ENCODE measurements at regions of chr9 and their contacts with region 1.

Region 1: GRCh38 chr9:130780865-130781504 is 54.1 kb upstream of the ABL1 start:
- DNase-seq: peak in 4 of 5 donors; percentile 75 to 79 (median 76)
- ATAC-seq: peak; percentile 77 to 94 (median 86)
- H3K4me3 ChIP-seq: peak overlapping the region in 10 of 12 donors; percentile 6 to 55 (median 39)
- H3K27ac ChIP-seq: peak overlapping the region; percentile 74 to 95 (median 84)
- H3K4me1 ChIP-seq: peaks cover 0 to 55% (median 33%) of the 10 kb centered on the region in 12 donors
- H3K27me3 ChIP-seq: no peaks in the 10 kb centered on the region
- CTCF ChIP-seq: no peak
- POLR2A ChIP-seq: peak in 1 of 2 donors; percentile 53

Region 2: DNA sequence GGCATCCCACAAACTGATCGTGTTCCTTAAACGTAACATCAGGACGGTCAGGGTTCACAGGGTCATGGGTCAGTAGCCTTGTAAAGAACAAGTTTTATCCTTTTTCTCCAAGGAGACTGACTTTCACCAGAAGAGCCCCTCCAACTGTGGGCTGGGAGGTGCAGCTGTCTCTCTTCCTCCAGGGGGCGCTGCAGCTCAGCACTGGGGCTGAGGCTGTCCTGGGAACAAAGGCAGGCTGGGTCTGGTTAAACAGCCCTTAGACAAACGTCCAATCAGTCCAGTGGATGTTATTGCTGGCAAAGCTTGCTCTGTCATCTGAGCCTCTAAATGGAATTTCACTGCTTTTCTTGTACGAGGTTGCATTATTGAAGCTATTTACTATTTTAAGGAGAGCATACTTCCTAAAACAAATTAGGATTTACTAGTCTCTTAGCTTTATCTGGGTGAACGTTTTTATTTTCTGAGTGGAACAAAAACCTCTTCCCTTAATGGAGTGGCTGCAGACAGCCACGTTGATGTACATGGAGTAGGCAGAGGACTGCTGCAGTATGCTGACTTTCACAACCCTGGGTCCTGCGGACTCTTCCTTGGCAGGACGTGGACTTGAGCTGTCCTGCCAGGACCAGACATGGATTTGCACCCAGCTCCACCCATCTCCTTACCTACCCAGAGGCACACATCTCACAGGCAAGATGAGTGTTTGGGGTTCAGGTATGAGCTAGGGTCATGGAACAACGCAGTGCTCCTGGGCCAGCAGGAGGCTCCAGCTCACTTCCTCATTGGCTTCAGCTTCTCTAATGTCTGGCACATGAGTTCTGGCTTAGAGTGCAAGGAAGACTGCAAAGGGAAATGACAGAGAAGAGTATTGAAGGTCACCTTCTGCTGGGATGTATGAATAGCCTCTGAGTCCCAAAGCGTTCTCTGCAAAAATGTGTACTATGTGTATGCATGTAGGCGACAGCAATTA is 79.6 kb before region 1 on chr9:
- intact Hi-C with region 1: no loop called
- DNase-seq: peak; percentile 80 to 89 (median 82)
- ATAC-seq: peak; percentile 90 to 96 (median 92)
- H3K4me3 ChIP-seq: no peak overlapping the region
- H3K27ac ChIP-seq: peak overlapping the region in 4 of 12 donors; percentile 3 to 50 (median 15)
- H3K4me1 ChIP-seq: peaks cover 0 to 17% (median 8%) of the 10 kb centered on the region in 12 donors
- H3K27me3 ChIP-seq: no peaks in the 10 kb centered on the region
- CTCF ChIP-seq: peak; percentile 90 to 97 (median 93)
- POLR2A ChIP-seq: no peak

Region 3: GRCh38 chr9:130810609-130811136 is 29.7 kb after region 1 on chr9:
- intact Hi-C with region 1: loop called in 1 of 10 experiments (anchors 5 kb)
- DNase-seq: no peak
- ATAC-seq: no peak
- H3K4me3 ChIP-seq: no peak overlapping the region
- H3K27ac ChIP-seq: no peak overlapping the region
- H3K4me1 ChIP-seq: peaks cover 0 to 6% (median 0%) of the 10 kb centered on the region in 12 donors
- H3K27me3 ChIP-seq: no peaks in the 10 kb centered on the region
- CTCF ChIP-seq: no peak
- POLR2A ChIP-seq: no peak

Region 4: GRCh38 chr9:130834371-130835311 is 53.7 kb after region 1 on chr9 and contains the start of gene ABL1:
- intact Hi-C with region 1: loop called in 6 of 10 experiments (anchors 2 to 10 kb)
- DNase-seq: peak; percentile 80 to 88 (median 82)
- ATAC-seq: peak; percentile 69 to 92 (median 85)
- H3K4me3 ChIP-seq: peak within 1 kb of the TSS; percentile 38 to 92 (median 70)
- H3K27ac ChIP-seq: peak within 1 kb of the TSS; percentile 80 to 97 (median 94)
- H3K4me1 ChIP-seq: peaks cover 8 to 76% (median 57%) of the 10 kb centered on the region in 12 donors
- H3K27me3 ChIP-seq: no peaks in the 10 kb centered on the region
- CTCF ChIP-seq: peak in 1 of 12 donors; percentile 17
- POLR2A ChIP-seq: peak in 1 of 2 donors; percentile 14
- total RNA-seq, gene ABL1: 27.2 to 49.8 (median 34.1) TPM

Region 5: GRCh38 chr9:130842545-130842944 is 61.6 kb after region 1 on chr9:
- intact Hi-C with region 1: loop called in 7 of 10 experiments (anchors 5 to 10 kb)
- DNase-seq: no peak
- ATAC-seq: no peak
- H3K4me3 ChIP-seq: no peak overlapping the region
- H3K27ac ChIP-seq: peak overlapping the region in 5 of 12 donors; percentile 79 to 96 (median 87)
- H3K4me1 ChIP-seq: peaks cover 18 to 100% (median 85%) of the 10 kb centered on the region in 12 donors
- H3K27me3 ChIP-seq: no peaks in the 10 kb centered on the region
- CTCF ChIP-seq: no peak
- POLR2A ChIP-seq: no peak

Region 6: GRCh38 chr9:130847327-130848217 is 66.6 kb after region 1 on chr9:
- intact Hi-C with region 1: loop called in 5 of 10 experiments (anchors 5 kb)
- DNase-seq: peak; percentile 62 to 85 (median 74)
- ATAC-seq: peak; percentile 79 to 92 (median 88)
- H3K4me3 ChIP-seq: peak overlapping the region in 2 of 12 donors; percentile 25 to 32
- H3K27ac ChIP-seq: peak overlapping the region; percentile 40 to 96 (median 88)
- H3K4me1 ChIP-seq: peaks cover 13 to 82% (median 63%) of the 10 kb centered on the region in 12 donors
- H3K27me3 ChIP-seq: no peaks in the 10 kb centered on the region
- CTCF ChIP-seq: peak in 5 of 12 donors; percentile 10 to 35 (median 31)
- POLR2A ChIP-seq: no peak

Measured in heart left ventricle (tissue), 16 donors.